Naive thymus-derived CD4-positive, alpha-beta T cell (primary cell): ENCODE measurements at regions of chr5 and their contacts with region 1.

Region 1: GRCh38 chr5:140547508-140548299 is at the start of gene EIF4EBP3:
- DNase-seq: peak; percentile 76 to 90 (median 88)
- ATAC-seq: peak; percentile 98
- H3K4me3 ChIP-seq: peak within 1 kb of the TSS; percentile 83
- H3K4me3 Mint-ChIP-seq: peak within 1 kb of the TSS; percentile 85 to 99 (median 92)
- H3K27ac ChIP-seq: peak within 1 kb of the TSS; percentile 89
- H3K27ac Mint-ChIP-seq: peak within 1 kb of the TSS; percentile 93 to 99 (median 98)
- H3K4me1 ChIP-seq: peaks cover 12 to 20% of the 10 kb centered on the region in 2 donors
- H3K4me1 Mint-ChIP-seq: peaks cover 22 to 49% (median 37%) of the 10 kb centered on the region in 7 donors
- H3K27me3 ChIP-seq: no peaks in the 10 kb centered on the region
- H3K27me3 Mint-ChIP-seq: no peaks in the 10 kb centered on the region
- total RNA-seq, gene EIF4EBP3: 12.5 to 19.5 (median 16.2) TPM

Region 2: DNA sequence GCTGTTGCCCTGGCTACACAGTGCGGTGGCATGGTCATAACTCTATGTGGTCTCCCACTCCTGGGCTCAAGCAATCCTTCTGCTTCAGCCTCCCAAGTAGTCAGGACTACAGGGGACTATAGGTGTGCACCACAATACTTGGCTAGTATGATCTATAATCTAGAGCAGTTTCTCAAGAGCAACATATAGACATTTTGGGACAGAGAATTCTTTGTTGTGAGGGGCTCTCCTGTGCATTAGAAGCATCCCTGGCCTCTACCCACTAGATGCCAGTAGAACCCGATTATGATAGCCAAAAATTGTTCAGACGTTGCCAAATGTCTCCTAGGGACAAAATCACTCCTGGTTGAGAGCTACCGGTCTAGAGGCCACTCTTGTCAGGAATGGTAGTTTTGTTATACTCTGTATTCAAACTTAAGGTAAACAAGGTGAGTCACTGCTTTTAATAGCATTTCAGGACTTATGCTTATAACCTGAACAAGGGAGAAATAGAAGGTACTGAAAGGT is 138.9 kb before region 1 on chr5:
- CTCF ChIA-PET with region 1: no interaction called
- POLR2A ChIA-PET with region 1: interaction called, 3 read pairs
- intact Hi-C with region 1: loop called in 1 of 2 experiments (anchors 5 kb)
- DNase-seq: no peak
- ATAC-seq: no peak
- H3K4me3 ChIP-seq: no peak overlapping the region
- H3K4me3 Mint-ChIP-seq: peak overlapping the region in 8 of 10 donors; percentile 8 to 60 (median 30)
- H3K27ac ChIP-seq: no peak overlapping the region
- H3K27ac Mint-ChIP-seq: peak overlapping the region in 3 of 9 donors; percentile 31 to 41 (median 36)
- H3K4me1 ChIP-seq: peaks cover 14 to 24% of the 10 kb centered on the region in 2 donors
- H3K4me1 Mint-ChIP-seq: peaks cover 32 to 78% (median 56%) of the 10 kb centered on the region in 7 donors
- H3K27me3 ChIP-seq: no peaks in the 10 kb centered on the region
- H3K27me3 Mint-ChIP-seq: no peaks in the 10 kb centered on the region

Region 3: DNA sequence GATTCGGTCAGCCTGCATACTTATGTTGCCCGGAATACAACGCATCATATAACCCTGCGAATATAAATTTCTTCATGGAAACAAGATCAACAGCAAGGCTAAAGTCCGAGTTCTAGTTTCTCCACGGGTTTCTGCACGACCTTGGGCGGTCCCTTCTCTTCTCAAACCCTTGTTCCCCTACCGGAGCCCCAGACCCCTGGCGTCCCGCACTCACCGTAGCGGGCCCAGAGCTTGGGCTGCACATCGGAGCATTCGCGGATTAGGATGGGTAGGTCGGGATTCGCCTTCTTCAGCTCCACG is 99.3 kb after region 1 on chr5:
- CTCF ChIA-PET with region 1: interaction called, 11 read pairs
- POLR2A ChIA-PET with region 1: interaction called, 51 read pairs
- intact Hi-C with region 1: loop called in 1 of 2 experiments (anchors 1 kb)
- DNase-seq: no peak
- ATAC-seq: no peak
- H3K4me3 ChIP-seq: peak overlapping the region; percentile 80
- H3K4me3 Mint-ChIP-seq: peak overlapping the region; percentile 88 to 100 (median 98)
- H3K27ac ChIP-seq: peak overlapping the region; percentile 95
- H3K27ac Mint-ChIP-seq: peak overlapping the region; percentile 93 to 100 (median 99)
- H3K4me1 ChIP-seq: peaks cover 18% of the 10 kb centered on the region in 2 donors
- H3K4me1 Mint-ChIP-seq: peaks cover 32 to 72% (median 61%) of the 10 kb centered on the region in 7 donors
- H3K27me3 ChIP-seq: no peaks in the 10 kb centered on the region
- H3K27me3 Mint-ChIP-seq: no peaks in the 10 kb centered on the region

Region 4: DNA sequence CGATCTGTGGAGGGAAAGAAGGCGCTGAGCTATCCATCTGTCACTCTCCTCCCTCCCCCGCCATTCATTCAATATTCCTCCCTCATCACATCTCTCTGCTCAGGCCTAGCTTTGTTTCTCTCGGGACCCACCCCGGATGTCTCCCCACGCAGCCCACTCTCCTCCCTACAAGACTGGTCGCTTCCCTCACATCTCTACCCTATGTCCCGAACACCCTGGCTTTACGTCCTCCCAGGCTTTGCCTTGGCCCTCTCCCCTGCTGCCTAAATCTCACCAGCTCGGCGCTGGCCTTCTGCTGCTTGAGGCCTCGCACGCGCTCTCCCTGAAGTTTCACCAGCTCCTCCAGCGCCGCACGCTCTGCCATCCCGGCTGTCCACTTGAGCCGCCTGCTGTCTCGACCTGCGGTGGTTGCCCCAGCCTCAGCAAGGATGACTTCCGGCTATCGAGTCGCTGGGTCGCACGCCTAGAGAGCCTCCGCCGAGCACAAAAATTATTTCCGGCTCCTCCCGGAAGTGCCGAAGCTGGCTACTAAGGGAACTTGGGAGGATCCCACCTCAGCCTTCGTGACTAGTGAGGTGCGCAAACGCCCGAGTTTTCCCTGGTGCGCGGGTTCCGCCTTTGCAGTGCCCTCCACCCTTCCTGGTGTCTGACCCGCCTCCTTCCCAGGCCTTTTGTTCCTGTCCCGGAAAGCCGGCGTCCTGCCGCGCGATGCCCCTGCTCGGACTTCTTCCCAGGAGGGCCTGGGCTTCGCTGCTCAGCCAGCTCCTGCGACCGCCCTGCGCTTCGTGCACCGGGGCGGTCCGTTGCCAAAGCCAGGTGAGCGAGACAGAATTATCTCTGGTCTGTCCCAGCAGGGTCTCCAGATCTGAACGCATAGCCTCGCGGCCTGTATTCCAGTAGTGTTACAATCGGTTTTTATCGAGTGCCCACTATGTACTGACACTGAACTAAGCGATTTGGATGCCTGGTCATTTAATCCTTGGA is 143.5 kb after region 1 on chr5 and contains the starts of genes HARS1 and HARS2:
- CTCF ChIA-PET with region 1: interaction called, 3 read pairs
- POLR2A ChIA-PET with region 1: interaction called, 12 read pairs
- intact Hi-C with region 1: no loop called
- DNase-seq: peak; percentile 55 to 83 (median 71)
- ATAC-seq: peak; percentile 97
- H3K4me3 ChIP-seq: peak within 1 kb of the TSS; percentile 91
- H3K4me3 Mint-ChIP-seq: peak within 1 kb of the TSS; percentile 92 to 100 (median 99)
- H3K27ac ChIP-seq: peak within 1 kb of the TSS; percentile 89
- H3K27ac Mint-ChIP-seq: peak within 1 kb of the TSS; percentile 91 to 99 (median 98)
- H3K4me1 ChIP-seq: peaks cover 16 to 22% of the 10 kb centered on the region in 2 donors
- H3K4me1 Mint-ChIP-seq: peaks cover 29 to 60% (median 53%) of the 10 kb centered on the region in 7 donors
- H3K27me3 ChIP-seq: no peaks in the 10 kb centered on the region
- H3K27me3 Mint-ChIP-seq: no peaks in the 10 kb centered on the region
- total RNA-seq, gene HARS1: 48.7 to 85.7 (median 68.5) TPM
- total RNA-seq, gene HARS2: 25.4 to 59.6 (median 38.8) TPM

Region 5: DNA sequence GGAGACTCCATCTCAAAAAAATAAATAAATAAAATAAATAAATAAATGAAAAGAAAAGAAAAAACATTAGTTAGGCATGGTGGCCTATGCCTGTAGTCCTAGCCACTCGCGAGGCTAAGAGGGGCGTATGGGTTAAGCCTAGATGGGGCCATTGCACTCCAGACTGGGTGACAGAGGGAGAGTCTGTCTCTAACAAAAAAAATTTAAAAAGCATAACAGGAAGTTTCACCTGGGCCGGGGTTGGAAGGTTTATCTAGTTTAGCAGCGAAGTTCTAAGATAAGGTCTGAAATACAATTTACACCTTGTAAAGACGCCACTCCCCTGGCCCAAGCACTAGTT is 170.5 kb after region 1 on chr5:
- CTCF ChIA-PET with region 1: interaction called, 6 read pairs
- POLR2A ChIA-PET with region 1: interaction called, 3 read pairs
- intact Hi-C with region 1: loop called in 1 of 2 experiments (anchors 1 kb)
- DNase-seq: no peak
- ATAC-seq: no peak
- H3K4me3 ChIP-seq: no peak overlapping the region
- H3K4me3 Mint-ChIP-seq: peak overlapping the region in 4 of 10 donors; percentile 13 to 58 (median 36)
- H3K27ac ChIP-seq: no peak overlapping the region
- H3K27ac Mint-ChIP-seq: peak overlapping the region in 1 of 9 donors; percentile 67
- H3K4me1 ChIP-seq: no peaks in the 10 kb centered on the region
- H3K4me1 Mint-ChIP-seq: peaks cover 0 to 10% (median 2%) of the 10 kb centered on the region in 7 donors
- H3K27me3 ChIP-seq: peaks cover 0 to 4% of the 10 kb centered on the region in 2 donors
- H3K27me3 Mint-ChIP-seq: peaks cover 0 to 15% (median 12%) of the 10 kb centered on the region in 5 donors

Region 6: GRCh38 chr5:140833997-140834723 is 286.5 kb after region 1 on chr5 and contains the start of gene PCDHA7:
- CTCF ChIA-PET with region 1: no interaction called
- POLR2A ChIA-PET with region 1: no interaction called
- intact Hi-C with region 1: no loop called
- DNase-seq: no peak
- ATAC-seq: no peak
- H3K4me3 ChIP-seq: no peak within 1 kb of the TSS
- H3K4me3 Mint-ChIP-seq: peak within 1 kb of the TSS in 2 of 10 donors; percentile 5 to 6
- H3K27ac ChIP-seq: no peak within 1 kb of the TSS
- H3K27ac Mint-ChIP-seq: peak within 1 kb of the TSS in 1 of 9 donors; percentile 18
- H3K4me1 ChIP-seq: no peaks in the 10 kb centered on the region
- H3K4me1 Mint-ChIP-seq: no peaks in the 10 kb centered on the region
- H3K27me3 ChIP-seq: peaks cover 0 to 7% of the 10 kb centered on the region in 2 donors
- H3K27me3 Mint-ChIP-seq: peaks cover 0 to 56% (median 34%) of the 10 kb centered on the region in 5 donors
- total RNA-seq, gene PCDHA7: not detected

Region 7: GRCh38 chr5:141402553-141403260 is 855.0 kb after region 1 on chr5 and contains the start of gene PCDHGA9:
- CTCF ChIA-PET with region 1: no interaction called
- POLR2A ChIA-PET with region 1: no interaction called
- intact Hi-C with region 1: no loop called
- DNase-seq: no peak
- ATAC-seq: no peak
- H3K4me3 ChIP-seq: no peak within 1 kb of the TSS
- H3K4me3 Mint-ChIP-seq: peak within 1 kb of the TSS in 9 of 10 donors; percentile 28 to 76 (median 68)
- H3K27ac ChIP-seq: no peak within 1 kb of the TSS
- H3K27ac Mint-ChIP-seq: peak within 1 kb of the TSS in 3 of 9 donors; percentile 8 to 49 (median 49)
- H3K4me1 ChIP-seq: no peaks in the 10 kb centered on the region
- H3K4me1 Mint-ChIP-seq: peaks cover 0 to 11% (median 4%) of the 10 kb centered on the region in 7 donors
- H3K27me3 ChIP-seq: peaks cover 7 to 26% of the 10 kb centered on the region in 2 donors
- H3K27me3 Mint-ChIP-seq: peaks cover 50 to 82% (median 74%) of the 10 kb centered on the region in 5 donors
- total RNA-seq, gene PCDHGA9: 0.16 to 0.41 (median 0.22) TPM in 4 of 5 experiments, not detected in the other